CD14-positive monocyte (primary cell): ENCODE measurements at regions of chr1 and their contacts with region 1.

Region 1: GRCh38 chr1:228405987-228406265 is 709 bp downstream of the TRIM11 start:
- DNase-seq: no peak
- H3K4me3 ChIP-seq: peak overlapping the region; percentile 58 to 95 (median 75)
- H3K4me3 Mint-ChIP-seq: peak overlapping the region; percentile 89 to 93
- H3K27ac ChIP-seq: peak overlapping the region in 1 of 2 donors; percentile 89
- H3K27ac Mint-ChIP-seq: peak overlapping the region in 5 of 7 donors; percentile 48 to 93 (median 86)
- H3K4me1 ChIP-seq: peaks cover 31 to 43% of the 10 kb centered on the region in 2 donors
- H3K4me1 Mint-ChIP-seq: peaks cover 66% of the 10 kb centered on the region
- H3K27me3 ChIP-seq: no peaks in the 10 kb centered on the region
- H3K27me3 Mint-ChIP-seq: no peaks in the 10 kb centered on the region
- CTCF ChIP-seq: no peak

Region 2: DNA sequence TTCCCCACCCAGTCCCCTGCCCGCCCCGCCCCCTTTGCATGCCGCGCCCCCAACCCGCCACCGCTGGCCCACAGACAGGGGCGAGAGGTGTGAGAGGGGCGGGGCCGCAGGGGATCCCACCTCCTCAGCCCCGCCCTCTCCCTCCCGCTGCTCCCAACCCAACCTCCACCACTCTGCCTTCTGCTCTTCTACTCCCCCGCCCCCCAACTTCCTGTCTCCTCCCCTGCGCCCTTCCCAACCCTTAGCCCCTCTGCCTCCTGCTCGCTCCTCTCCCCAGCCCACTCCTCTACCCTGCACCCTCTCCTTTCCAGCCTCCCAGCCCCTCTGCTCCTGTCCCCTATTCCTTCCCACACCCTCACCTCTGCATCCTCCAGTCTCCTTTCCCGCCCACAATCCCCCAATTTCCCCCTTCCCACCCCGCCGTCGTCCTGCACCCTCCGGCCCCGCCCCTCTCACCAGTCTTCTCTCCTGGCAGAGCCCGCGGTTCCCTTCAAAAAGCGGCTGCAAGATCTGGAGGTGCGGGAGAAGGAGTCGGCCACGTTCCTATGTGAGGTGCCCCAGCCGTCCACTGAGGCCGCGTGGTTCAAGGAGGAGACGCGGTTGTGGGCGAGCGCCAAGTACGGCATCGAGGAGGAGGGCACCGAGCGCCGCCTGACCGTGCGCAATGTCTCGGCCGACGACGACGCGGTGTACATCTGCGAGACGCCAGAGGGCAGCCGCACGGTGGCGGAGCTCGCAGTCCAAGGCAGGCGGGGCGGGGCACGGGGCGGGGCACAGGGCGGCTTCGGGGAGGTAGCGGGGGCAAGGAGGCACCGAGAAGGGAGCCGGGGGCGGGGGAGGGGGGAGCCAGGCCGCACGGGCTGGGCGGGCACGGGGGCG is 192.7 kb before region 1 on chr1:
- intact Hi-C with region 1: loop called in 1 of 2 experiments (anchors 10 kb)
- DNase-seq: peak; percentile 76 to 81 (median 80)
- H3K4me3 ChIP-seq: peak overlapping the region; percentile 7 to 70 (median 33)
- H3K4me3 Mint-ChIP-seq: peak overlapping the region; percentile 75 to 88
- H3K27ac ChIP-seq: no peak overlapping the region
- H3K27ac Mint-ChIP-seq: peak overlapping the region in 1 of 7 donors; percentile 32
- H3K4me1 ChIP-seq: peaks cover 6 to 16% of the 10 kb centered on the region in 2 donors
- H3K4me1 Mint-ChIP-seq: peaks cover 6% of the 10 kb centered on the region
- H3K27me3 ChIP-seq: peaks cover 0 to 10% of the 10 kb centered on the region in 2 donors
- H3K27me3 Mint-ChIP-seq: peaks cover 9 to 25% (median 24%) of the 10 kb centered on the region in 3 donors
- CTCF ChIP-seq: peak; percentile 16

Region 3: GRCh38 chr1:228349701-228350171 is 56.2 kb before region 1 on chr1:
- intact Hi-C with region 1: no loop called
- DNase-seq: no peak
- H3K4me3 ChIP-seq: no peak overlapping the region
- H3K4me3 Mint-ChIP-seq: no peak overlapping the region
- H3K27ac ChIP-seq: no peak overlapping the region
- H3K27ac Mint-ChIP-seq: no peak overlapping the region
- H3K4me1 ChIP-seq: no peaks in the 10 kb centered on the region
- H3K4me1 Mint-ChIP-seq: no peaks in the 10 kb centered on the region
- H3K27me3 ChIP-seq: no peaks in the 10 kb centered on the region
- H3K27me3 Mint-ChIP-seq: peaks cover 0 to 2% (median 0%) of the 10 kb centered on the region in 3 donors
- CTCF ChIP-seq: no peak

Region 4: DNA sequence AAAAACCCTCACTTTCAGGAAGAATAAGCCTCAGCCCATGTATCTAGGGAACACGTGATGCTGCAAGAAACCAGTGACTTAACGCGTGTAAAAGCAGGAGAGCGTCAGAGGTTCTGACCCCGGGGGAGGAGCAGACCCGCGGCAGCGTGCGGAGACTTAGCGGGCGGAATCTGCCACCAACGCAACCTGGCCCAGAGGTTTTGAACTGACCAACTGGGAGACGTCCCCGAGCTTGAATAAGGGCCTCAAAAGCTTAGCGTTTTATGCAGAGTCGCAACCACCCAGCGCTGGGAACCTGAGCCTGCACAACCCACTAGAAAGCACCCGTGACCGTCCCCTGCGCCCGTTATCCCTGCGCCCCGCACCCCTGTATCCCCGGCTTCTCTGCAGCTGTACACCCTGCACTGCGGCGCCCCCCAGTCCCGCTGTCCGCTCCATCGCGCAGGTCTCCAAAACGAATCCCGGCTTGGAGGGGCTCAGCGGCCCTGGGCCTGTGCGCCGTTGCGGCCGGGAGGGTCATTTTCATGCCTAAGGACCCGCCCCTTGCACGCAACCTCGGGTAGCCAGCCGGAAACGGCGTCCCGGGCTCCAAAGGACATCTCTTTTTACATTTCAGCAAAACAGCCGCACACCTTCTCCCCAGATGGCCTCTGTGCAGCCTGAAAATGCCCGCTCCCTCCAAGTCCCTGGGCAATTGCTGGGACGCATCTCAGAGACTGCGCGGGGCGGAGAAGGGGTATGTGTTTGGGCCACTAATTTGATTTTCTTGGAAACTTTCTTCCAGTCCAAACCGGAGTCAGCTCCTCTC is 40.1 kb after region 1 on chr1:
- intact Hi-C with region 1: loop called (anchors 5 kb)
- DNase-seq: peak; percentile 23 to 83 (median 40)
- H3K4me3 ChIP-seq: peak overlapping the region; percentile 4 to 68 (median 4)
- H3K4me3 Mint-ChIP-seq: peak overlapping the region; percentile 62 to 87
- H3K27ac ChIP-seq: no peak overlapping the region
- H3K27ac Mint-ChIP-seq: peak overlapping the region in 3 of 7 donors; percentile 31 to 43 (median 40)
- H3K4me1 ChIP-seq: peaks cover 8 to 12% of the 10 kb centered on the region in 2 donors
- H3K4me1 Mint-ChIP-seq: peaks cover 12% of the 10 kb centered on the region
- H3K27me3 ChIP-seq: peaks cover 20 to 61% of the 10 kb centered on the region in 2 donors
- H3K27me3 Mint-ChIP-seq: peaks cover 43 to 76% (median 54%) of the 10 kb centered on the region in 3 donors
- CTCF ChIP-seq: no peak

Region 5: DNA sequence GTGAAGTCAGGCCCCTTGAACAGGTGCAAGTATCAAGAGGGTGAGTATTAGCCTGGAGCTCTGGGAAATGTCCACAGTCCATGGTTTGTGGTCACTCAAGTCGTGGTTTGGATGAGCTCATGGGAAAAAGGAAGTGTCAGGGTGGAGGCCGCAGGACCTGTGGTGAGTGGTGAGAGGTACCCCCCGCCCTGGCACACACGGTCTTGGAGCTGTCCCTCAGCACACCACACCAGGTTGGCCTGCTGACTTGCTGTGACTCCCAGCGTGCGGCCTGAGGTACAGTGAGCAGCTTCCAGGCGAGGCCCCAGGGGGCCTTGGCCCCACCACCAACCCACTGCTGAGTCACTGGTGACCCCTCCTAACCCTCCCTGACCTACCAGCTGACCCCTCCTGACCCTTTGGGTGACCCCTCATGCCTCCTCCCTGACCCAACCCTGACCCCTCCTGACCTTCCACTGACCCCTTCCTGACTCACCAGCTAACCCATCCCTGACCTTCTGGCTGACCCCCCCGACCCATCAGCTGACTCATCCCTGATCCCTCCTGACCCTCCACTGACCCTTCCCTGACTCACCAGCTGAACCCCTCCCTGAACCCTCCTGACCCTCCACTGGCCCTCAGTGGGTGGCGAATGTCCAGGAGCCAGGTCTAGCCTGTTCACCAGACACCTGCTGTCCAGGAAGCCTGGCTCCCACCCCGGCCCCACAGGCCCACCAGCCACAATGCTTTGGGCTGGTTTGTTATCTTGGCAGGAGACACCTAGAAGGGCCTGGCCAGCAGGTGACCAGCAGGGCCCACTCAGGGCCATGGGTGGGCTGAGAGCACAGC is 46.5 kb after region 1 on chr1:
- intact Hi-C with region 1: loop called (anchors 5 kb)
- DNase-seq: peak; percentile 33 to 81 (median 67)
- H3K4me3 ChIP-seq: no peak overlapping the region
- H3K4me3 Mint-ChIP-seq: peak overlapping the region in 1 of 2 donors; percentile 11
- H3K27ac ChIP-seq: no peak overlapping the region
- H3K27ac Mint-ChIP-seq: peak overlapping the region in 3 of 7 donors; percentile 15 to 75 (median 38)
- H3K4me1 ChIP-seq: peaks cover 14 to 25% of the 10 kb centered on the region in 2 donors
- H3K4me1 Mint-ChIP-seq: peaks cover 25% of the 10 kb centered on the region
- H3K27me3 ChIP-seq: peaks cover 0 to 28% of the 10 kb centered on the region in 2 donors
- H3K27me3 Mint-ChIP-seq: peaks cover 18 to 32% (median 26%) of the 10 kb centered on the region in 3 donors
- CTCF ChIP-seq: no peak

Region 6: GRCh38 chr1:228486596-228487335 is 80.8 kb after region 1 on chr1:
- intact Hi-C with region 1: loop called in 1 of 2 experiments (anchors 5 kb)
- DNase-seq: peak; percentile 59 to 85 (median 70)
- H3K4me3 ChIP-seq: peak overlapping the region; percentile 67 to 84 (median 82)
- H3K4me3 Mint-ChIP-seq: peak overlapping the region; percentile 87 to 94
- H3K27ac ChIP-seq: peak overlapping the region; percentile 97 to 99
- H3K27ac Mint-ChIP-seq: peak overlapping the region; percentile 99 to 100 (median 100)
- H3K4me1 ChIP-seq: peaks cover 30 to 44% of the 10 kb centered on the region in 2 donors
- H3K4me1 Mint-ChIP-seq: peaks cover 37% of the 10 kb centered on the region
- H3K27me3 ChIP-seq: no peaks in the 10 kb centered on the region
- H3K27me3 Mint-ChIP-seq: peaks cover 2 to 12% (median 8%) of the 10 kb centered on the region in 3 donors
- CTCF ChIP-seq: no peak